CD8-positive, alpha-beta T cell (primary cell): ENCODE measurements at regions of chr4 and their contacts with region 1.

Region 1: DNA sequence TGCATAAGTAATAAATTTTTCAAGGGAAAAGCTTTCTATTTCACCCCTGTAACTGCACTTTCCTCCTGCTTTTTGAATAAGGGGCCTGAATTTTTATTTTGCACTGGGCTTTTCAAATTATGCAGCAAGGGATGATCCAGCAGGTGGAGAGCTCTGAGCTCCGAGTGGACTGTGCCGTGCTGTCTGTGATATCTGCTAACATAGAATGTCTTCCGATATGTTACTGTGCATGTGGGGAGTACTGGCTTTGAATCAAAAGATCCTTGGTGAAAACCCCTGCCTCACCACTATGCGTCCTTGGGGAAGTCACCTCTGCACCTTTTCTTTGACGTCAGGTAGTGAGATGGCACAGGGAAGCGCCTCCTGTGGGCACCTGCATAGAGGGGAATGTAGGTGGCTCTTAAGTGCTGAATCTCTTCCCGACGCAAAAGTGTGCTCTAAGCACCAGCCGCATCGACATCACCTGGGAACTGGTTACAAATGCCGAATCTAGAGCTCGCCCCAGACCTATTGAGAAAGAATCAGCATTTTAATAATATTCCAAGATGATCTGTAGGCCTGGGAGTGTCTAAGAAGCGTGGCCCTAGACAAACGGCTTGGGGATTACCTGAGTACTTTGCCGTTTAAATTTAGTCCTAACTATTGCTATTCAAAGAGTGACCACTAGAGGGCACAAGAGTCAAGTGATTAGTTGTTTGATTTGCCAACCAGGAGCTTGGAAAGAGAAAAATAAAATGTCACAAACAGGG is 19.2 kb upstream of the WFS1 start:
- DNase-seq: peak in 3 of 9 experiments; percentile 35 to 79 (median 75)
- ATAC-seq: peak; percentile 62
- H3K4me3 ChIP-seq: no peak overlapping the region
- H3K4me3 Mint-ChIP-seq: no peak overlapping the region
- H3K27ac ChIP-seq: no peak overlapping the region
- H3K27ac Mint-ChIP-seq: no peak overlapping the region
- H3K4me1 ChIP-seq: no peaks in the 10 kb centered on the region
- H3K4me1 Mint-ChIP-seq: no peaks in the 10 kb centered on the region
- H3K27me3 ChIP-seq: peaks cover 6 to 7% of the 10 kb centered on the region in 2 experiments
- H3K27me3 Mint-ChIP-seq: peaks cover 37% of the 10 kb centered on the region
- CTCF ChIP-seq: peak; percentile 76

Region 2: GRCh38 chr4:5747738-5748365 is 502.6 kb before region 1 on chr4:
- CTCF ChIA-PET with region 1: no interaction called
- POLR2A ChIA-PET with region 1: no interaction called
- intact Hi-C with region 1: no loop called
- DNase-seq: no peak
- ATAC-seq: no peak
- H3K4me3 ChIP-seq: no peak overlapping the region
- H3K4me3 Mint-ChIP-seq: no peak overlapping the region
- H3K27ac ChIP-seq: no peak overlapping the region
- H3K27ac Mint-ChIP-seq: no peak overlapping the region
- H3K4me1 ChIP-seq: no peaks in the 10 kb centered on the region
- H3K4me1 Mint-ChIP-seq: no peaks in the 10 kb centered on the region
- H3K27me3 ChIP-seq: no peaks in the 10 kb centered on the region
- H3K27me3 Mint-ChIP-seq: no peaks in the 10 kb centered on the region
- CTCF ChIP-seq: no peak

Region 3: DNA sequence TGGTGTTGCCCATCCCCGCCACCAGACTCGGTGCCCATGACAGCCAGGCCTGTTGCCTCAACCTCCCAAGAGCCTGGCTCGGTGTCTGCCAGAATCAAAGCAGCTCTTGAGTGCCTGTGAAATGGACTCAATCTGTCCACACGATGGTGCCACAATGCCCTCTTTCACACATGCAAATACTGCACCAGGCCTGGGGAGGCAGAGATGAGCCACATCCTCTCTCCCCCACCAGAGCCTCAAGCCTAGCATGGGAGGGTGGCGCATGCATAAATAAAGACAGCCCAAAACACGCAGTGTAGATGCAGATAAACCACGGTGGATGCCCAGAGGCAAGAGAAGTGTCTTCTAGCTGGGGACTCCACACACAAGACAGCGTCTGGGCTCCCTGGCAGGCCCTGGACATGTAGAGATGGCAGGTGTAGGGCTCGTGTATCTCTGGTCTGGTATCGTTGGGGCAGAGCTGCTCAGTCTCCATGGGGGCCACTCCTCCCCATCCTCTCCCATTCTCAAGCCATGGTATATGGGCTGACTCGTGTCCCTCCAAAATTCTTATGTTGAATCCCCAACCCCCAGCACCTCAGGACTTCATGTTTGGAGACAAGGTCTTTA is 115.7 kb before region 1 on chr4:
- CTCF ChIA-PET with region 1: interaction called, 15 read pairs
- POLR2A ChIA-PET with region 1: no interaction called
- intact Hi-C with region 1: loop called in 1 of 2 experiments (anchors 1 kb)
- DNase-seq: peak; percentile 7 to 86 (median 42)
- ATAC-seq: peak; percentile 88
- H3K4me3 ChIP-seq: no peak overlapping the region
- H3K4me3 Mint-ChIP-seq: no peak overlapping the region
- H3K27ac ChIP-seq: peak overlapping the region in 1 of 2 experiments; percentile 4
- H3K27ac Mint-ChIP-seq: no peak overlapping the region
- H3K4me1 ChIP-seq: no peaks in the 10 kb centered on the region
- H3K4me1 Mint-ChIP-seq: peaks cover 6% of the 10 kb centered on the region
- H3K27me3 ChIP-seq: no peaks in the 10 kb centered on the region
- H3K27me3 Mint-ChIP-seq: no peaks in the 10 kb centered on the region
- CTCF ChIP-seq: peak; percentile 38

Region 4: DNA sequence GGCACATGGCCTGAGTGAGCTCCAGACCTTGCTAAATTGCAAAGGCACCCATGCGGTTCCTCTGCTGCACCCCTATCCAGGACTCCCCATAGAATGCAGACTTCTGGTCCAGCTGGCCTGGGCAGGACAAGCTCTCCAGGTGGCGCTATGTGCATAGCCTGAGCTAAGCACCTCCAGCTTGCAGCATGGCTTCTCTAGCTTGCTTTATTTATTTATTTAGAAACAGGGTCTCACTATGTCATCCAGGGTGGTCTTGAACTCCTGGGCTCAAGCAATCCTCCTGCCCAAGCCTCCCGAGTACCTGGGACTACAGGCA is 13.8 kb after region 1 on chr4:
- CTCF ChIA-PET with region 1: interaction called, 42 read pairs
- POLR2A ChIA-PET with region 1: interaction called, 6 read pairs
- intact Hi-C with region 1: loop called in 1 of 2 experiments (anchors 1 kb)
- DNase-seq: peak in 4 of 9 experiments; percentile 17 to 47 (median 32)
- ATAC-seq: no peak
- H3K4me3 ChIP-seq: no peak overlapping the region
- H3K4me3 Mint-ChIP-seq: no peak overlapping the region
- H3K27ac ChIP-seq: no peak overlapping the region
- H3K27ac Mint-ChIP-seq: no peak overlapping the region
- H3K4me1 ChIP-seq: peaks cover 4% of the 10 kb centered on the region
- H3K4me1 Mint-ChIP-seq: peaks cover 10% of the 10 kb centered on the region
- H3K27me3 ChIP-seq: no peaks in the 10 kb centered on the region
- H3K27me3 Mint-ChIP-seq: peaks cover 17% of the 10 kb centered on the region
- CTCF ChIP-seq: no peak

Region 5: DNA sequence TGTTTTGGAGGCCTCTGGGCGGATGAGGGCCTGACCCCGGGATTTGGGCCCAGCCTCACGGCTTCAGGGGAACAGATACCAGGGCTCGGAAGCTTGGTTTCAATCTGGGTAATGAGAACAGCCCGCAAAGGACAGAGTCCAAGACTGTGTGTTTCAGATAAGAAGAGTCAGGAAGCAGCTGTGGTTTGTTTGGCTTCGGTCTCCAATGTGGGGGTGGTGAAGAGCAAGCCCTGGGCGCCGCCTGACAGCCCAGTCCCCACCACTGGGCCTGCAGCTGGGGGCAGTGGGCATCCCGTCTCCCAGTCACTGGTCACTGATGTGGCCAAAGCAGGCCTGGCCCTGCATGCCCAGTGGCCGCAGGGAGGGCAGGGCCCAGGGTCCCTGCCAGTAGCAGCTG is 28.4 kb after region 1 on chr4:
- CTCF ChIA-PET with region 1: interaction called, 10 read pairs
- POLR2A ChIA-PET with region 1: no interaction called
- intact Hi-C with region 1: no loop called
- DNase-seq: peak in 1 of 9 experiments; percentile 20
- ATAC-seq: no peak
- H3K4me3 ChIP-seq: no peak overlapping the region
- H3K4me3 Mint-ChIP-seq: no peak overlapping the region
- H3K27ac ChIP-seq: no peak overlapping the region
- H3K27ac Mint-ChIP-seq: no peak overlapping the region
- H3K4me1 ChIP-seq: peaks cover 13% of the 10 kb centered on the region
- H3K4me1 Mint-ChIP-seq: peaks cover 9% of the 10 kb centered on the region
- H3K27me3 ChIP-seq: no peaks in the 10 kb centered on the region
- H3K27me3 Mint-ChIP-seq: no peaks in the 10 kb centered on the region
- CTCF ChIP-seq: no peak

Region 6: DNA sequence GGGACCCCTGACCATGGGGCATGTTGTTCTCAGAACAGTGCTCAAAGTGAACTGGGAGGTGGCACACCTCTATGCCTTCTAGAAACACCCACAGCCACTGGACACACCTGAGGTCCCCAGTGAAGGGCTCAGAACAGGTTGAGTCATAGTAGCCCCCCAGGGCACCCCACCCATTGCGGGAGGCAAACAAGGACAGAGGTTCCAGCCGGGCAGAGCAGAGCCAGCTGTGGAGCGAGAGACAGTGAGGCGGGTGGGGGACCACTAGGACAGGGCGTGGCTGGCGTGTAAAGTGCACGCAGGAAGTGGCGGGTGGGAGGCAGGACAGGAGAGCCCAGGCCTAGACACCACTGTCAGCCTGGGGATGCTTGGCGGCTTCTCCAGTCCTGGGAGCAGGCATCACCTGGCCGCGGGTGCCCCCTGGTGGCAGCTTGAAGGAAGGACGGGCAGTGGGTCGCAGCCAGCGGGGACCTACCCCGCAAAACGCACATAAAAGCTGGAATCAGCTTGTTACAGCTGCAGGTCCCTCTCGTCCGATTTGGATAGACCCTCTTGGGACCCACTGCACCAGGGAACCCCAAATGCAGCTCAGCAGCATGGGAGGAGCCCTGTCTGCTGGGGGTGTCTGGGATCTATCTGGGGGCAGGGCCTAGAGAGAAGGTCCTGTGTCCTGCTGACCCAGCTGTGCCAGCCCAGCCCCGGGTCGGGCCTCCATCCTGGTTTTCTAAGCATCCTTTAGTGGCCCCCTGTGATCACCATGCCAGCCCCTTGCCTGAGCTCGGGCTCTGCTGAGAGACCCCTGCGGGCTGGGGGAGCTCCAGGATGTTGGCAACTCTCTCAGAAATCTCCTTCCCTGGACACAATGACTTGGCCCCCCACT is 76.9 kb after region 1 on chr4:
- CTCF ChIA-PET with region 1: interaction called, 336 read pairs
- POLR2A ChIA-PET with region 1: interaction called, 7 read pairs
- intact Hi-C with region 1: loop called (anchors 1 kb)
- DNase-seq: peak; percentile 58 to 89 (median 78)
- ATAC-seq: peak; percentile 68
- H3K4me3 ChIP-seq: no peak overlapping the region
- H3K4me3 Mint-ChIP-seq: no peak overlapping the region
- H3K27ac ChIP-seq: no peak overlapping the region
- H3K27ac Mint-ChIP-seq: no peak overlapping the region
- H3K4me1 ChIP-seq: no peaks in the 10 kb centered on the region
- H3K4me1 Mint-ChIP-seq: peaks cover 1% of the 10 kb centered on the region
- H3K27me3 ChIP-seq: peaks cover 0 to 4% of the 10 kb centered on the region in 2 experiments
- H3K27me3 Mint-ChIP-seq: peaks cover 31% of the 10 kb centered on the region
- CTCF ChIP-seq: peak; percentile 86

Region 7: DNA sequence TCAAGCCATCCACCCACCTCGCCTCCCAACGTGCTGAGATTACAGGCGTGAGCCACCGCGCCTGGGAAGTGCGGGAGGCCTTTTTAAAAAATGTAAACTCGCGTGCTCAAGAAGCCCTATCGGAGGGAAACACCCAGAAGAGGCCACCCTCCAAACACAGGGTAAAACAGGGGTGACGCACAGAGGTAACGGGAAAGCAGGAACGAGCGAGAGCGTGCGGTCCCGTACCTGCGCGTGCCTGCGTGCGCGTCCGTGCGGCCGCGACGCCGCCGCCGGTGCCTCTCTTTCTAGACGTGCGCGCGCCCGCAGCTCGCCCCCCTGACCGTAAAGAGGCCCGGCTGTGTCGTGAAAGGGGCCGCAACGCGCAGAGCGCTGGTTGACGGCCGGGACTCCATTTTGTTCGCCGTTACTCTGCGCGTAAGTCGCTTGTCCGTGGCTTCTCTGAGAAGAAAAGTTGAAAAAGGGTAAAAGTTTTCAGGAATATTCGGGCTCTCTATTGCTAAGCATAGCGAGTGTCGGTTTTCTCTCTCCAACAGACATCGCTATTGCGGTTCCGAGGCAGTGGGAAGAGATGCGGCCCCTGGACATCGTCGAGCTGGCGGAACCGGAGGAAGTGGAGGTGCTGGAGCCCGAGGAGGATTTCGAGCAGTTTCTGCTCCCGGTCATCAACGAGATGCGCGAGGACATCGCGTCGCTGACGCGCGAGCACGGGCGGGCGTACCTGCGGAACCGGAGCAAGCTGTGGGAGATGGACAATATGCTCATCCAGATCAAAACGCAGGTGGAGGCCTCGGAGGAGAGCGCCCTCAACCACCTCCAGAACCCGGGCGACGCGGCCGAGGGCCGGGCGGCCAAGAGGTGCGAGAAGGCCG is 390.1 kb after region 1 on chr4 and contains the start of gene MRFAP1:
- CTCF ChIA-PET with region 1: no interaction called
- POLR2A ChIA-PET with region 1: no interaction called
- intact Hi-C with region 1: no loop called
- DNase-seq: peak; percentile 90 to 98 (median 95)
- ATAC-seq: peak; percentile 79
- H3K4me3 ChIP-seq: peak within 1 kb of the TSS; percentile 96 to 97
- H3K4me3 Mint-ChIP-seq: peak within 1 kb of the TSS; percentile 99
- H3K27ac ChIP-seq: peak within 1 kb of the TSS; percentile 96
- H3K27ac Mint-ChIP-seq: peak within 1 kb of the TSS; percentile 99
- H3K4me1 ChIP-seq: peaks cover 17% of the 10 kb centered on the region
- H3K4me1 Mint-ChIP-seq: peaks cover 41% of the 10 kb centered on the region
- H3K27me3 ChIP-seq: no peaks in the 10 kb centered on the region
- H3K27me3 Mint-ChIP-seq: no peaks in the 10 kb centered on the region
- CTCF ChIP-seq: no peak
- total RNA-seq, gene MRFAP1: 177 to 183 TPM